Heart left ventricle (tissue), 16 donors: ENCODE measurements at regions of chr5 and their contacts with region 1.

Region 1: DNA sequence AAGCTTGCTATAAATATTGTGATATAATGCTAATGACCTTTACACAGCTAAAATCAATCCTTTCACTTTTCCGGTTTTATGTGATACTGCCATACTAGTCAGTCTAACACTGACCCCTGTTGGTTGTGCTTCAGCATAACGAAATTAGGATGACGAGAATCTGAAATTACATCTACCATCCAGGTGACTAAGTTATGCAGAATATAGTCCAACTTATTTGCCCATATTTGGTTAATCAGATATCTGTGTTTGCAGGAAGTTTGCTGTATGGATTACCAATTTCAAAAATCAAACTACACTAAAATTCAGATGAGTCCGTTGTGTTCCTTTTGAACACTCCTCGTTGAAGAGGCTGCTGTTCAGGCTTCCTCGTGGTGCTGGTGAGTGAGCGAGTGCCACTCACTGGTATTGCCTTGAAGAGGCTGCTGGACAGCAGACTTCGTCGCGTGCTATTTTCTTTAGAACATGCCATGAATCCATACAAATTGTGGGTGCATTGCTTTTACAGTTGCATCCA is 32.5 kb downstream of the TENT4A start:
- DNase-seq: no peak
- ATAC-seq: peak; percentile 50 to 78 (median 58)
- H3K4me3 ChIP-seq: no peak overlapping the region
- H3K27ac ChIP-seq: peak overlapping the region in 6 of 12 donors; percentile 15 to 56 (median 26)
- H3K4me1 ChIP-seq: peaks cover 0 to 14% (median 8%) of the 10 kb centered on the region in 12 donors
- H3K27me3 ChIP-seq: no peaks in the 10 kb centered on the region
- CTCF ChIP-seq: peak; percentile 61 to 86 (median 76)
- POLR2A ChIP-seq: no peak

Region 2: DNA sequence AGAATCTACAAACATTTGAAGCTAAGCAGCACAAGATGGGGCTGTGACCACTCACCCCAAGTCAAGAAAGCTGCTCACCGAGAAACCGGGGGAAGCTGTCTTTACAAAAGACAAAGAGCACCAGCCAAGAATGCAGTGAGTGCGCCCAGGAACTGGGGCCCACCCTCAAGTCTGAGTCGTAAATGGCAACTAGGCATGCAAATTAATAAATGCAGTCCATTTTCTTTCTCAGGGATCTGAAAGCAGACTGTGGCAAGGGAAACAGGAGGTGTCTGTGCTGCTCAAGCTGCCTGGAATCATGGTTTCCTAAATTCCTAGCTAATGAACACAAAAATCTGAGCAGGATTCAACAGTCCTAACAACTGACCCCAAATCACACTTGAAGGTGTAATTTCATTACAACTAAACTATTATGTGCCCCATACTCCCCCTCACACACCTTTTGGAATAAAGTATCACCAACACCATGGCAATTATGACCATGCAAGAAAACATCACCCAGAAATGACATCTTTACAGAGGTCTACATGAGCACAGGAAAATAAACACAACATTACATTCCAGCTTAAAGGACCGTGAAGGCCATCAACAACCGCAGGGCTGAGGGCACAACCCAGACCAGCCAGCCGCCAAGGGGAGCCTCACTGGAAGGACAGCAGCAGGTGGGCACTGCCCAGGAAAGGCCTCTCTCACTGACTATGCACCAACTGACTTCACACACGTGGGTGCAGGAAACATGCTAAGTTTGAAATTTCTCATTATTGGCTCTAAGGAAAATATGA is 130.5 kb before region 1 on chr5:
- intact Hi-C with region 1: loop called in 1 of 10 experiments (anchors 5 kb)
- DNase-seq: no peak
- ATAC-seq: no peak
- H3K4me3 ChIP-seq: no peak overlapping the region
- H3K27ac ChIP-seq: no peak overlapping the region
- H3K4me1 ChIP-seq: no peaks in the 10 kb centered on the region
- H3K27me3 ChIP-seq: no peaks in the 10 kb centered on the region
- CTCF ChIP-seq: no peak
- POLR2A ChIP-seq: no peak

Region 3: DNA sequence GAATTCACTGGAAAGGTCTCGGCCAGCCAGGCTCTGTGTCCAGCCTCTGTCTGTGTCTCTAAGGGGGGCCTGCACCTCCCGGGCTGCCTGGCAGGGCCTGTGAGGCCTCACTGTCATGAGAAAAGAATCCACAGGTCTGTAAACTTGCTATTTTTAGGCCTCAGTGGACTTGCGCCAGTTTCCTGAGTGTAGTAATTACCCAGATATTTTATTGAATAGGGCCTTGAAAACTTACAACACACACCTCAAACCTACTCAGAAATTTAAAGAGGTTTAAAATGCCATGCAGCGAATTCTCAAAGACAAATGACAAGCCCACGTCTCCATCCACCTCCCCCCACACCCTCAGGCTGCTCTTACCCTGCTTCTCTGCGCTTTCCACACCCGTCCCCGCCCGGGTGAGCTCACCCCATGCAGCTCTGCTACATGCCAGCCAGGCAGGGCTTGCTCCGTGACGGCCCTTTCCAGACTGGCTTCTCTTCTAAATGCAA is 41.4 kb before region 1 on chr5:
- intact Hi-C with region 1: loop called in 1 of 10 experiments (anchors 5 kb)
- DNase-seq: peak; percentile 73 to 90 (median 84)
- ATAC-seq: peak; percentile 94 to 97 (median 96)
- H3K4me3 ChIP-seq: no peak overlapping the region
- H3K27ac ChIP-seq: peak overlapping the region; percentile 72 to 93 (median 88)
- H3K4me1 ChIP-seq: peaks cover 4 to 25% (median 19%) of the 10 kb centered on the region in 12 donors
- H3K27me3 ChIP-seq: peaks cover 0 to 2% (median 0%) of the 10 kb centered on the region in 9 donors
- CTCF ChIP-seq: no peak
- POLR2A ChIP-seq: no peak